Astrocyte of the cerebellum (primary cell): ENCODE measurements at regions of chr10 and their contacts with region 1.

Region 1: GRCh38 chr10:123689880-123690279 is 23.7 kb downstream of the GPR26 start:
- DNase-seq: no peak
- H3K4me3 ChIP-seq: no peak overlapping the region
- CTCF ChIP-seq: no peak

Region 2: DNA sequence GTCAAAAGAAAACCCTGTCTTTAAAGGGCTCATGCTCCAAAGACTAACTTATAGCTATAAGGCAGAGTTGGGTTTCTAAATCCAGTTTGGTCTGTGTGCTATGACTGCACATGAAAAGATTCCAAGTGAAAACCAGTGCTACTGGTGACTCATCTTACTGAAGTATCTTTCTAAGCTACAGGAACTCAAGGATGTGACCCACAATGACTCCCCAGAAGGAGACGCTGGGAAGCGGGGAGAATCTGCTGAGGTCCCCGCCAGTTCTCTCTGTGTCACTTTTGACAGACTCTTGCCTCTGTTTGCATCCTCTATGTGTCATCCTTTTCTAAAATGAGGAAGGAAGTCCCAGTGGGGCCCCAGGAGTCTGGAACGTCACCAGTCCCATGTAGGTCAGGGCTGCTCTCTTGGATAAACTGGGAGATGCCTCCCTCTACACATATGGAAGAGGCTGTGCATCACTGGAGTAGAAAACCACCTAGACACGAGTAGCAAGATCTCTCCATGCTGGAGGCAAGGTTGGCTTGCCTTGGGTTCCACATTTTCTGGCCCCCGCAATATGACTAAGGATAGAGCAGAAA is 52.5 kb before region 1 on chr10:
- in situ Hi-C with region 1: no loop called
- DNase-seq: no peak
- H3K4me3 ChIP-seq: no peak overlapping the region
- CTCF ChIP-seq: no peak

Region 3: DNA sequence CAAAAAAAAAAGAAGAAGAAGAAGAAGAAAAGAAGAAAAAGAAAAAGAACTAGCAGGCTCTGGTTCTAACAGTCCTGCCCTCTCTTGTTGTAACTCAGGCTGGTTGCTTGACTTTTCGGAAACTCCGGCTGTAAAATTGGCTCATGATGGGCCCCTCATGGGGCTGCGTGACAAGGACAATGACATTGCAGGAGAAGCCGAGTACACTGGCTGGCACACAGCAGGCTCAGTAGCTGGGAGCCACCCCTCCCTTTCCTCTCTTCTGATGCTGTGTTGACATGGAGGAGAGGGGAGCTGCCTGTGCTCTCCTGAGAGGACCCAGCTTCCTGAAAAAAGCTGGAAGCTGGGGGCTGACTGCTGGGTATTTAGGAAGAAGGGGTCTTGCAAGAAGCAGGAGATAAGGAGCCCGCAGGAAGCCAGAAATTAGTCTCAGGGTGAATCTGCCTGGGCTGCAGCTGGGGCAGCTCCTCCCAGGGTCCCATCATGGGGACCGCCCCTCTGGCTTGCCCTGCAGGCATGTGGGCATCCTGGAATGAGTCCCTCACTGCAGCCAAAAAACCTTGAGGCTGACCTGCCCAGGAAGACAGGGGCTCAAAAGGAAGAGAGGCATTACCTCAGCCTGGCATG is 38.3 kb before region 1 on chr10:
- in situ Hi-C with region 1: loop called (anchors 5 kb)
- DNase-seq: no peak
- H3K4me3 ChIP-seq: no peak overlapping the region
- CTCF ChIP-seq: no peak

Region 4: GRCh38 chr10:123766012-123766411 is 76.1 kb after region 1 on chr10:
- in situ Hi-C with region 1: loop called (anchors 5 kb)
- DNase-seq: no peak
- H3K4me3 ChIP-seq: no peak overlapping the region
- CTCF ChIP-seq: no peak